CD4-positive, alpha-beta T cell (primary cell): ENCODE measurements at regions of chr11 and their contacts with region 1.

Region 1: GRCh38 chr11:108253176-108253575 is 30.3 kb downstream of the ATM start:
- DNase-seq: peak in 1 of 14 experiments; percentile 28
- ATAC-seq: peak; percentile 59
- H3K4me3 ChIP-seq: no peak overlapping the region
- H3K4me3 Mint-ChIP-seq: no peak overlapping the region
- H3K27ac ChIP-seq: no peak overlapping the region
- H3K27ac Mint-ChIP-seq: peak overlapping the region; percentile 79
- H3K4me1 ChIP-seq: peaks cover 5% of the 10 kb centered on the region
- H3K4me1 Mint-ChIP-seq: peaks cover 74% of the 10 kb centered on the region
- H3K27me3 ChIP-seq: no peaks in the 10 kb centered on the region
- H3K27me3 Mint-ChIP-seq: no peaks in the 10 kb centered on the region
- CTCF ChIP-seq: no peak

Region 2: DNA sequence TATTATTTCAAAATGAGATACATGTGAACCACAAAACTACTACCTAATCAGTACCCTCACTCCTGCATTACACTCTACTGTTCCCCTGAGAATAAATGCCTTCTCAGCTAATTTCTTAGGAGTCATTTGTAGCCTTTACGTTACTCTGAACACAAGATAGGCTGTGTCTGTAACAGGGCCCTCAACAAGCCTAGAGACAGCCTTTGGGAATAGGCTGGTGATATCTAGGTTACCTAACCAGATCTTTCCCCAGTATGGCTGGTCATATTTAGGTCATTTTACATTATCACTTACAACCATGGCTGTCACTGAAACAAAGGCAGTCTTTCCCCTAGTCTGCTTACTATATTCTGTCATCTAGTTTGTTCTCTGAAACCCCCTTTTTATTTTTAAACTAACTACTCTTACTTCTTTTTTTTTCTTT is 16.1 kb before region 1 on chr11:
- CTCF ChIA-PET with region 1: interaction called, 4 read pairs
- POLR2A ChIA-PET with region 1: interaction called, 58 read pairs
- intact Hi-C with region 1: loop called in 1 of 2 experiments (anchors 2 kb)
- DNase-seq: peak in 3 of 14 experiments; percentile 63 to 70 (median 64)
- ATAC-seq: peak; percentile 35
- H3K4me3 ChIP-seq: peak overlapping the region; percentile 14
- H3K4me3 Mint-ChIP-seq: peak overlapping the region; percentile 72
- H3K27ac ChIP-seq: peak overlapping the region; percentile 64 to 95
- H3K27ac Mint-ChIP-seq: no peak overlapping the region
- H3K4me1 ChIP-seq: peaks cover 68% of the 10 kb centered on the region
- H3K4me1 Mint-ChIP-seq: peaks cover 81% of the 10 kb centered on the region
- H3K27me3 ChIP-seq: no peaks in the 10 kb centered on the region
- H3K27me3 Mint-ChIP-seq: no peaks in the 10 kb centered on the region
- CTCF ChIP-seq: no peak

Region 3: GRCh38 chr11:108333403-108333899 is 80.3 kb after region 1 on chr11:
- CTCF ChIA-PET with region 1: no interaction called
- POLR2A ChIA-PET with region 1: no interaction called
- intact Hi-C with region 1: loop called in 1 of 2 experiments (anchors 5 kb)
- DNase-seq: no peak
- ATAC-seq: no peak
- H3K4me3 ChIP-seq: no peak overlapping the region
- H3K4me3 Mint-ChIP-seq: no peak overlapping the region
- H3K27ac ChIP-seq: no peak overlapping the region
- H3K27ac Mint-ChIP-seq: peak overlapping the region; percentile 36
- H3K4me1 ChIP-seq: no peaks in the 10 kb centered on the region
- H3K4me1 Mint-ChIP-seq: peaks cover 8% of the 10 kb centered on the region
- H3K27me3 ChIP-seq: no peaks in the 10 kb centered on the region
- H3K27me3 Mint-ChIP-seq: no peaks in the 10 kb centered on the region
- CTCF ChIP-seq: no peak